AG04449 (cell line): ENCODE measurements at regions of chr12 and their contacts with region 1.

Region 1: GRCh38 chr12:94101738-94102660 is 46.4 kb upstream of the PLXNC1 start:
- DNase-seq: no peak
- H3K4me3 ChIP-seq: peak overlapping the region; percentile 68
- CTCF ChIP-seq: peak; percentile 86

Region 2: GRCh38 chr12:93497456-93497855 is 604.5 kb before region 1 on chr12:
- CTCF ChIA-PET with region 1: interaction called, 360 read pairs
- POLR2A ChIA-PET with region 1: interaction called, 5 read pairs
- DNase-seq: no peak
- H3K4me3 ChIP-seq: no peak overlapping the region
- CTCF ChIP-seq: no peak

Region 3: GRCh38 chr12:93677195-93678064 is 424.6 kb before region 1 on chr12 and contains the start of gene CRADD:
- CTCF ChIA-PET with region 1: interaction called, 17 read pairs
- POLR2A ChIA-PET with region 1: no interaction called
- DNase-seq: peak; percentile 92
- H3K4me3 ChIP-seq: peak within 1 kb of the TSS; percentile 78
- CTCF ChIP-seq: no peak

Region 4: GRCh38 chr12:93785262-93786010 is 316.6 kb before region 1 on chr12:
- CTCF ChIA-PET with region 1: interaction called, 27 read pairs
- POLR2A ChIA-PET with region 1: interaction called, 6 read pairs
- DNase-seq: no peak
- H3K4me3 ChIP-seq: no peak overlapping the region
- CTCF ChIP-seq: no peak

Region 5: DNA sequence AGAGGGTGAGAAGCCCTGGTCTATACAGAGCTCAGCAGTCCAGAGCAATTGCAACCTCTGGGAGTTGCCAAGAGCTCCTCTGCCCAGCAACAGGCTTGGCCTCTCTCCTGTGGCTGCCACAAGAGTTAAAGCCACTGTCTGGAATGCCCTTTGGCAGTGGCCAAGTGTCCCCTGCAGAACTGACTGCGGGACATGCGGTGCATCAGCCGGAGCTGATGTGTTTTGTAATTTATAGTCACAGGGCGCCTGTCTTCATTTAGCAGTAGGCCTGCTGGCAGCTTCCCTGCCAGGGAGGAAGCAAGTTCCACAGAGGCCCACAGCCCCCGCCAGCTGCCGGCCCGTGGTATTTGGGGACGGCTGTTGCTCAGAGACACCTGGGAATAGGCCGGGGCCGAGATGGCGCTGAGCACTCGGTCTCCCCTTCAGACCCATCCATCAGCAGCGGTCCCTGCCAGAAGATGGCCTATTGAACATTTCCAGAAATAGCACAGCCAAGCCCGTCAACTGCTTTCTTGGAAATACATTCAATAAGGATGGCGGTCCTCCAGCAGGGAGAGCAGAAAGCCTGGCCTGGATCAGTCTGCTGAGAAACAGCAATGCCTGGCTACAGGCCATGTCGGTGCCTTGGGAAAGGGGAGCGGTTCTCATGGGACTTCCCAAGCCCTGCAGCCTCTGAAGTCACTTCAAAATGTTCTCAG is 207.5 kb before region 1 on chr12:
- CTCF ChIA-PET with region 1: interaction called, 47 read pairs
- POLR2A ChIA-PET with region 1: no interaction called
- DNase-seq: no peak
- H3K4me3 ChIP-seq: no peak overlapping the region
- CTCF ChIP-seq: no peak

Region 6: DNA sequence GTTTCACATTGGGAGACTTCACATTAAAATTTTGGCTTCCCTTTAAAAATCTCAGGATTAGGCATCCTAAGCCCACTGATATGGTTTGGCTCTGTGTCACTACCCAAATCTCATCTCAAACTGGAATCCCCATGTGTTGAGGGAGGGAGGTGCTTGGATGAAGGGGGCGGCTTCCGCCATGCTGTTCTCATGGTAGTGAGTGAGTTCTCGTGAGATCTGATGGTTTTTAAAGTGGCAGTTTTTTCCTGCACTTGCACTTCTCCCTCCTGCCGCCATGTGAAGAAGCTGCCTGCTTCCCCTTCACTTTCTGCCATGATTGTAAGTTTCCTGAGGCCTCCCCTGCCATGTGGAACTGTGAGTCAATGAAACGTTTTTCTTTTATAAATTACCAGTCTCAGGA is 19.3 kb before region 1 on chr12:
- CTCF ChIA-PET with region 1: interaction called, 55 read pairs
- POLR2A ChIA-PET with region 1: no interaction called
- DNase-seq: no peak
- H3K4me3 ChIP-seq: no peak overlapping the region
- CTCF ChIP-seq: no peak

Region 7: GRCh38 chr12:94289461-94290312 is 187.7 kb after region 1 on chr12:
- CTCF ChIA-PET with region 1: no interaction called
- POLR2A ChIA-PET with region 1: no interaction called
- DNase-seq: peak; percentile 56
- H3K4me3 ChIP-seq: no peak overlapping the region; the same call in 1 of the 2 replicates
- CTCF ChIP-seq: no peak